ENCODE measurements at regions of chr9 and their contacts with region 1.

Region 1: GRCh38 chr9:89929673-89930480 is 325.1 kb downstream of the GADD45G start:
- DNase-seq: no peak
- ATAC-seq: peak; percentile 20
- H3K4me3 ChIP-seq: no peak overlapping the region
- H3K27ac ChIP-seq: no peak overlapping the region
- H3K4me1 ChIP-seq: peaks cover 0 to 5% of the 10 kb centered on the region in 2 donors
- H3K27me3 ChIP-seq: no peaks in the 10 kb centered on the region

Region 2: DNA sequence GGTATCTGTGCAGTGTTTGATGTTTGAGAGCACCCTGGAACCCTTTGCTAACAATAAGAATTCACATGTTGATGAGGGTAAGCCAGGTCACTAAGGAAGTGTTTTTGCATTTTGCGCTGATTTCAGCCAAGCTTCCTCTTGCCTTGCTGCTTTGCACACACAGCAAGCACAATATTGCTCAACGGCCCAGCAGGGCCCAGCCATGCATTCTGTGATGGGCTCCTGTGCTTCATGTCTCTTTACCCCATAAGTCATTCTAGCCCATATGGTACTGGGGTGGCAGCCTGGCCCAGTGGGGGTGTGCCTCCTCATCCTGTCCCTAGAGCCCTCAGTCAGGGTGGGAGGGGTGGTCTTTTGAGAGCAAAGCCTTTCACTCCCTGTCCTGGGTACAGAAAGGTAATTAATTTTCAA is 156.2 kb after region 1 on chr9:
- intact Hi-C with region 1: loop called in 1 of 2 experiments (anchors 5 kb)
- DNase-seq: peak in 1 of 2 donors; percentile 60
- ATAC-seq: no peak
- H3K4me3 ChIP-seq: no peak overlapping the region
- H3K27ac ChIP-seq: no peak overlapping the region
- H3K4me1 ChIP-seq: no peaks in the 10 kb centered on the region
- H3K27me3 ChIP-seq: no peaks in the 10 kb centered on the region

Measured in aorta (tissue), 5 donors.